ENCODE measurements at regions of chr15 and their contacts with region 1.

Region 1: GRCh38 chr15:78108299-78109084 is 16.1 kb downstream of the SH2D7 start:
- DNase-seq: peak; percentile 75 to 89 (median 77)
- H3K4me3 ChIP-seq: no peak overlapping the region
- H3K4me3 Mint-ChIP-seq: no peak overlapping the region
- H3K27ac ChIP-seq: no peak overlapping the region
- H3K27ac Mint-ChIP-seq: peak overlapping the region in 4 of 8 donors; percentile 31 to 86 (median 55)
- H3K4me1 ChIP-seq: peaks cover 32% of the 10 kb centered on the region
- H3K4me1 Mint-ChIP-seq: peaks cover 34 to 45% (median 34%) of the 10 kb centered on the region in 3 donors
- H3K27me3 ChIP-seq: no peaks in the 10 kb centered on the region
- H3K27me3 Mint-ChIP-seq: peaks cover 0 to 3% of the 10 kb centered on the region in 2 donors

Region 2: GRCh38 chr15:77907824-77908751 is 200.4 kb before region 1 on chr15:
- CTCF ChIA-PET with region 1: interaction called, 10 read pairs
- POLR2A ChIA-PET with region 1: no interaction called
- DNase-seq: peak in 2 of 5 donors; percentile 15 to 19
- H3K4me3 ChIP-seq: no peak overlapping the region
- H3K4me3 Mint-ChIP-seq: peak overlapping the region in 2 of 7 donors; percentile 7 to 73
- H3K27ac ChIP-seq: no peak overlapping the region
- H3K27ac Mint-ChIP-seq: no peak overlapping the region
- H3K4me1 ChIP-seq: no peaks in the 10 kb centered on the region
- H3K4me1 Mint-ChIP-seq: peaks cover 0 to 2% (median 0%) of the 10 kb centered on the region in 3 donors
- H3K27me3 ChIP-seq: no peaks in the 10 kb centered on the region
- H3K27me3 Mint-ChIP-seq: peaks cover under 1 to 9% of the 10 kb centered on the region in 2 donors

Region 3: GRCh38 chr15:78000091-78000926 is 108.2 kb before region 1 on chr15:
- CTCF ChIA-PET with region 1: interaction called, 32 read pairs
- POLR2A ChIA-PET with region 1: interaction called, 3 read pairs
- DNase-seq: peak; percentile 69 to 84 (median 71)
- H3K4me3 ChIP-seq: no peak overlapping the region
- H3K4me3 Mint-ChIP-seq: no peak overlapping the region
- H3K27ac ChIP-seq: no peak overlapping the region
- H3K27ac Mint-ChIP-seq: peak overlapping the region; percentile 23 to 78 (median 53)
- H3K4me1 ChIP-seq: no peaks in the 10 kb centered on the region
- H3K4me1 Mint-ChIP-seq: peaks cover 4 to 25% (median 12%) of the 10 kb centered on the region in 3 donors
- H3K27me3 ChIP-seq: no peaks in the 10 kb centered on the region
- H3K27me3 Mint-ChIP-seq: peaks cover 0 to 2% of the 10 kb centered on the region in 2 donors

Region 4: DNA sequence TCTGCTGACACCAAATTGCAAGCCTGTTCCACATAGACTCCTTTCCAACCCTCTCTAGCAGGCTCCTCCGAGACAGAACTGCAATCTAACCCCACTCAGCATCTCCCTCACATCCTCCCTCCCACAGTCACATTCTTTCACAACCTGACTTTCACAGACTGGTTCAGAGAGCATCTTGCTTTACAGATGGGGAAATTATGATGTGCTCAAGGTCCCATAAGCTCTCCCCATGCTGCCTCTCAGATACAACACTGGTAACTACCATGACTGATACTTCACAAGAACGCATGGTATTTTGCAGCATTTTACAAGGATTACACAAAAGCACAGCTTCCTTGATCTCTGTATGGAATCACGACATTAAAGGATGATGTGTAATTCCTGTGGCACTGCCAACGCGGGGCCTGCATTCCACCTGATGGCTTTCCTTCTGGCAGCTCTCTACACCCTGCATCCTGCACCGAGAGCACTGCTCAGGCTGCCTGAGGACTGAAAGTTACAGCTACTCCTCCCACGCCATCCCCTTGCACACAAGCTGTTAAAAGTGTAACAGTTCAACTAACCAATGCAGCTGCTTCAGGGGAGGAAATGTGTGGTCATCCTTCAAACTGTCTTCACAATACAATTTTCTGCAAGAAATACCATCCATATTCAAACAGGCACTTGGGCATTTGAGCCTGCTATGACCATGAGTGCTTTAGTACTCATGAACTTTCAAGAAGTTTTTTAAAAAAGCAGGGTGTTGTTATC is 58.6 kb before region 1 on chr15:
- CTCF ChIA-PET with region 1: interaction called, 16 read pairs
- POLR2A ChIA-PET with region 1: interaction called, 3 read pairs
- DNase-seq: peak in 3 of 5 donors; percentile 33 to 66 (median 46)
- H3K4me3 ChIP-seq: peak overlapping the region; percentile 38
- H3K4me3 Mint-ChIP-seq: peak overlapping the region; percentile 6 to 87 (median 74)
- H3K27ac ChIP-seq: peak overlapping the region; percentile 75
- H3K27ac Mint-ChIP-seq: peak overlapping the region; percentile 87 to 99 (median 97)
- H3K4me1 ChIP-seq: peaks cover 96% of the 10 kb centered on the region
- H3K4me1 Mint-ChIP-seq: peaks cover 98 to 100% (median 100%) of the 10 kb centered on the region in 3 donors
- H3K27me3 ChIP-seq: no peaks in the 10 kb centered on the region
- H3K27me3 Mint-ChIP-seq: no peaks in the 10 kb centered on the region

Region 5: GRCh38 chr15:78120523-78120922 is 12.0 kb after region 1 on chr15:
- CTCF ChIA-PET with region 1: interaction called, 14 read pairs
- POLR2A ChIA-PET with region 1: no interaction called
- DNase-seq: no peak
- H3K4me3 ChIP-seq: no peak overlapping the region
- H3K4me3 Mint-ChIP-seq: no peak overlapping the region
- H3K27ac ChIP-seq: no peak overlapping the region
- H3K27ac Mint-ChIP-seq: no peak overlapping the region
- H3K4me1 ChIP-seq: no peaks in the 10 kb centered on the region
- H3K4me1 Mint-ChIP-seq: no peaks in the 10 kb centered on the region
- H3K27me3 ChIP-seq: no peaks in the 10 kb centered on the region
- H3K27me3 Mint-ChIP-seq: no peaks in the 10 kb centered on the region

Region 6: DNA sequence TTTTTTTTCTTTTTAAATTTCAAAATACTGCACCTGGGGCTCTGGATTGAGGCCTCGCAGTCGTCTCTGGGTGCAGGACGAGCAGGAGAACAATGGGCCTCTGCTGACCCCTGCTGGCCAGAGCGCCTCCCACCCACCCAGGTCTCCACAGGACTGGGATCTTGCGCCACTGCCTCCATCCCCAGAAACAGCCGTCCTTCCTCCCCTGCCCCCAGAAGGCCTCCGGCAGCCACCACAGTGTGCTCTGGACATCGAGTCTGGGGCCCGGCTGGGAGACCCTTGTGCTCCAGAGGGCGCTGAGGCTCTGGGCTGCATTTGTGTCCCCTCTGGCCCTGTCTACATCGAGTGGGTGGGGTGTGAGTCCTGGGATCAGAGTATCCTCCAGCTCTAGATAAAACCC is 132.5 kb after region 1 on chr15:
- CTCF ChIA-PET with region 1: interaction called, 54 read pairs
- POLR2A ChIA-PET with region 1: interaction called, 3 read pairs
- DNase-seq: peak; percentile 64 to 85 (median 71)
- H3K4me3 ChIP-seq: no peak overlapping the region
- H3K4me3 Mint-ChIP-seq: no peak overlapping the region
- H3K27ac ChIP-seq: no peak overlapping the region
- H3K27ac Mint-ChIP-seq: peak overlapping the region in 1 of 8 donors; percentile 63
- H3K4me1 ChIP-seq: no peaks in the 10 kb centered on the region
- H3K4me1 Mint-ChIP-seq: peaks cover 2 to 4% (median 3%) of the 10 kb centered on the region in 3 donors
- H3K27me3 ChIP-seq: no peaks in the 10 kb centered on the region
- H3K27me3 Mint-ChIP-seq: peaks cover 0 to 6% of the 10 kb centered on the region in 2 donors

Region 7: DNA sequence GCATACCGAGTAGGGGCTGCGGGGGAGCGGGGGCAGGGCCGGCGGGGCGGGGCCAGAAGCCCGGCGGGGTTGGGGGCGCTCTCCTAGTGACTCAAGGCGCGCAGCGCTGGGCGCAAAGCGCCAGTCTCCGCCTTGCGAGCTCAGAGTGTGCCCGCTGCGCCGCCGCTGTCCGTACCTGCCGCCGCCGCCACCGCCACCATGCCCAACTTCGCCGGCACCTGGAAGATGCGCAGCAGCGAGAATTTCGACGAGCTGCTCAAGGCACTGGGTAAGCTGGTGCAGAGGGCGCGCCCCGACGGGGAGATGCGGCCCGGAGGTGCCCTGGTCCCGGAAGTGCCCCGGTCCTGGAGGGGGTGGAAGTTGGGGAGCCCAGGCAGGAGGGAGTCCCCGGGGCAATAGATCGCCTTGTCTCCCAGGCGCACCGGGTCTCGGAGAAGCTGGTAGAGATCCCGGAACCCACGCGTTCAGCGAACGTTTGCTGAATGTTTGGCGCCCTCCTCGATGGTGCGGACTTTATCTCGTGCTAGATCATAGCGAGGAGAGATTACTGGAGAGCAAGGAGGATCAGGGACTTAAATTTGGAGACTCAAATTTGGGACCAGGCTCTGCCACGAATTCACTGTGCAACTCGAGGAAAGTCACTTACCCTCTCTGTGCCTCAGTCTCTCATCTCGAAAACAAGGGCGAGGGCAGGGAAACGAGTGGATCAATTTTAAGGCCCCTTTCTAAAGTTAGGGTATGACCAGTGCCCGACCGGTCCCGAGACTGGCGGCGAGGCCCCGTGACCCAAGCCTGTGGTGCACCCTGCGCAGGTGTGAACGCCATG is 232.0 kb after region 1 on chr15 and contains the start of gene CRABP1:
- CTCF ChIA-PET with region 1: no interaction called
- POLR2A ChIA-PET with region 1: no interaction called
- DNase-seq: no peak
- H3K4me3 ChIP-seq: no peak within 1 kb of the TSS
- H3K4me3 Mint-ChIP-seq: no peak within 1 kb of the TSS
- H3K27ac ChIP-seq: no peak within 1 kb of the TSS
- H3K27ac Mint-ChIP-seq: no peak within 1 kb of the TSS
- H3K4me1 ChIP-seq: no peaks in the 10 kb centered on the region
- H3K4me1 Mint-ChIP-seq: peaks cover 0 to 5% (median 4%) of the 10 kb centered on the region in 3 donors
- H3K27me3 ChIP-seq: peaks cover 20% of the 10 kb centered on the region
- H3K27me3 Mint-ChIP-seq: peaks cover 29 to 56% of the 10 kb centered on the region in 2 donors
- total RNA-seq, gene CRABP1: not detected